Naive thymus-derived CD8-positive, alpha-beta T cell (primary cell): ENCODE measurements at regions of chr20 and their contacts with region 1.

Region 1: DNA sequence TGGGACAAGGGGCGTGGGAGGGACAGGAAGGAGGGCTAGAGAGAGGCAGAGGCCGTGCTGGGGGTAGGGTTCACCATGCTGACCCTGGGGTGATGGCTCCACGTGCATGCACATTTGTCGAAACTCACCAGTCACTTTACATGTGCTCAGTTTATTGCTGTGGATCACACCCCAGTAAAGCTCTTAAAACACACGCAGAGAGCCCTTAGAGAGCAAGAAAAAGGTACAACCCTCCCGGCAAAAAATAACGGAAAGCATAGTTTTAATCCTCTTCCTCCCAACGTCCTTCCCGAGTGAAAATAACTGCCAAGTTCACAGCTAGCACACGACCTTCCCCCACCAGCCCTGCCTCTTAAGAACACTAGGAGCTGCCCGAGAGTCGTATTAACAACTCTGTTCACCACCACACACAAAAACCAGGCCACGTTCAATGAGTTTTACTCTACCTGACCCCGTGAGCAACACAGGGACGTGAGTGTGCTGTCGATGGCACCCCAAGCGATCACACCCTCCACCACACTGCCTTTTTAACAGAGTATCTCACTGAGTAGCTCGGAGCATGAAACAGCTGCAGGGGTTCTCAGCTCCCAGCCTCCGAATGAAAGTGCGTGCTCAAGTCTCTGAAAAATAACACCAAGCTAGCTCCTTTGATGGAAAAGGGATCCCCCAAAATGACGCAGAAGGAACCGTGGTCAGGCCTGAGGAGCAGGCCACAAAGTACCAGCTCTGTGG is 39.7 kb downstream of the TAF4 start:
- DNase-seq: peak in 8 of 10 donors; percentile 22 to 53 (median 36)
- ATAC-seq: peak; percentile 84 to 89
- H3K4me3 Mint-ChIP-seq: peak overlapping the region in 4 of 10 donors; percentile 0 to 55 (median 18)
- H3K27ac Mint-ChIP-seq: peak overlapping the region; percentile 9 to 83 (median 40)
- H3K4me1 Mint-ChIP-seq: peaks cover 28 to 70% (median 46%) of the 10 kb centered on the region in 4 donors
- H3K27me3 Mint-ChIP-seq: no peaks in the 10 kb centered on the region

Region 2: DNA sequence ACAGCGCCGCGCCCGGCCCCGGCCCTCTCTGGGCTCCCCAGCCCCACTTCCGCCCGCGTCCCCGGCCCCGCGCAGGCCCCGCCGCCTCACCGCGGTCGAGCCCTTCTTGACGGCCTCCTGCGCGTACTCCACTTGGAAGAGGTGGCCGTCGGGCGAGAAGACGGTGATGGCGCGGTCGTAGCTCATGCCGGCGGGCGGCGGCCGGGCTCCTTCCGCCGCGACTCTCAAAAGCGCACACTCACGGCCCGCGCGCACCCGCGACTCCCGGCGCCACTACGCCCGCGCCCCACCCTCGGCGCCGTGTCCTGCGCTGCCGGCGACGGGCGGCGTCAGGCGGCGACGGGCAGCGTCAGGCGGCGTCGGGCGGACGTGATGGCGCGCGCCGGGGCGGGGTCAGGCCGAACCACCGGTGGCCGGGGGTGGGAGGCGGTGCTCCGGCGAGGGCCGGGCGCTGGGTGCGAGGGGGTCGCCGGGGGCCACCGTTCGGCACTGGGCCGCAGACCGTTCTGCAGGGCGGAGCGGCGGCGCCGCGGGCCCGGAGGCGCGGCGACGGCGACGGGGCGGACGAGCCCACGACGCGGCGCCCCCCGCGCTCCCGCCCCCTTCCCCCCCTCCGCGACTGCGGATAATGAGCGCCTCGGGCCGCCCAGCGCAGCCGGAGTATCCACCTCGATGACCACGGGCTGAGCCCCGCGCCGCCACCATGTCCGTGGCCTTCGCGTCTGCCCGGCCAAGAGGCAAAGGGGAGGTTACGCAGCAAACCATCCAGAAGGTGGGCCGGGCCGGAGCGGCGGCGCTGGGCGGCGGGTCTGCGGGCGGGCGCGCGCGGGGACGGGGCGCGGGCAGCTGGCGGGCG is 117.3 kb after region 1 on chr20 and contains the starts of genes PSMA7 and SS18L1:
- POLR2A ChIA-PET with region 1: interaction called, 10 read pairs
- DNase-seq: peak; percentile 73 to 90 (median 84)
- ATAC-seq: peak; percentile 82 to 84
- H3K4me3 Mint-ChIP-seq: peak within 1 kb of the TSS; percentile 81 to 93 (median 89)
- H3K27ac Mint-ChIP-seq: peak within 1 kb of the TSS; percentile 85 to 97 (median 94)
- H3K4me1 Mint-ChIP-seq: peaks cover 24 to 59% (median 50%) of the 10 kb centered on the region in 4 donors
- H3K27me3 Mint-ChIP-seq: no peaks in the 10 kb centered on the region
- polyA plus RNA-seq, gene PSMA7: 362 to 473 (median 419) TPM
- polyA plus RNA-seq, gene SS18L1: 0.39 to 0.58 (median 0.50) TPM